ENCODE measurements at regions of chr10 and their contacts with region 1.

Region 1: DNA sequence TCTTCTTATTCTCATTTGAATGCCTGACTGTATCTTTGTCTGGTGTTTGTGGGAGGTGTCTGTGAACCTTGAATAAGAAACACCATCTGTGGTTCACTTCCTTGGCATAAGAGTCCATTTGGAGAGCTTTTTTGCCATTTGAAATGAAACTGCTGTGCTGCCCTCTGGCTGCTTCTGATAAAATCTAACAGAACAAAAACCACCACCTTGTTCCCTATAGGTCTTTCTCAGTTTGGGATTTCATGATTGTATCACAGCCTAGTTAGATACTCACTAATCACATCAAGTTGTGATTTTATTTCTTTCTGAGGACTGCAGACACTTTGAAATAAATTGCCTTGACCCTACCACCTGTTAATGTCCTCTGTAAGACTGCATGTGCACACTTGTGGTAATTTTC is 102.7 kb upstream of the FAM13C start:
- DNase-seq: no peak
- ATAC-seq: peak; percentile 58 to 91 (median 70)
- H3K4me3 ChIP-seq: no peak overlapping the region
- H3K27ac ChIP-seq: no peak overlapping the region
- H3K4me1 ChIP-seq: peaks cover 4% of the 10 kb centered on the region
- H3K27me3 ChIP-seq: no peaks in the 10 kb centered on the region
- CTCF ChIP-seq: peak; percentile 62

Region 2: DNA sequence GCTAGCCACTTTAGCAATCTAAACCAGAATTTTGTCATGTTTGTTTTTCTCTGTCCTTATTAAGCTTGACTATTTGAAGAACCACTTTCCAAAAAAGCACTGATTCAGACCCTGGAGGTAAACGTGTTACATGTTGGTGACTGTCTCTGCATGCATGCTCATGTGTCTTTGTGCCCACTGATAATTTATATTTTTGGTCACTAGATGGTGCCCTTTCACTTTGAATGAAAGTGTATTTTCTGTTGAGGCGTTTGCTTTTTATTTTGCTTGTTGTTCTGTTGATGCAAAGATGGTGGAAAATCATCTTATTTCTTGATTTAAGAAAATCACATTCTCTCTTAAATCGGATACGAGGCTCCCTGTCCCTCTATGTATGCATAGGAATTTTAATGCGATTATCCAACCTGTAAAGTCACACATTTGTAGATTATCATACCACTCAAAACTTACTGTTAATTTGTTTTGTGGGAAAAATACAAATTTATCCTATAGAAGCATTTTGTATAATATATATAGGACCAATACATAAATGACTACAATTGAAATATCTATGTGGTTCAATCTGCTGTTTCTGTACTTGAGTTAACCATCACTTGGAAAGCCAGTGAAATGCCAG is 683.1 kb before region 1 on chr10:
- intact Hi-C with region 1: loop called in 1 of 2 experiments (anchors 10 kb)
- DNase-seq: no peak
- ATAC-seq: peak in 3 of 4 donors; percentile 41 to 80 (median 66)
- H3K4me3 ChIP-seq: no peak overlapping the region
- H3K27ac ChIP-seq: peak overlapping the region; percentile 42
- H3K4me1 ChIP-seq: peaks cover 3% of the 10 kb centered on the region
- H3K27me3 ChIP-seq: no peaks in the 10 kb centered on the region
- CTCF ChIP-seq: peak; percentile 63

Region 3: GRCh38 chr10:58952747-58953466 is 512.2 kb before region 1 on chr10:
- intact Hi-C with region 1: loop called in 1 of 2 experiments (anchors 5 kb)
- DNase-seq: no peak
- ATAC-seq: peak; percentile 59 to 79 (median 72)
- H3K4me3 ChIP-seq: no peak overlapping the region
- H3K27ac ChIP-seq: peak overlapping the region; percentile 16
- H3K4me1 ChIP-seq: no peaks in the 10 kb centered on the region
- H3K27me3 ChIP-seq: no peaks in the 10 kb centered on the region
- CTCF ChIP-seq: peak; percentile 83

Region 4: GRCh38 chr10:59240582-59241183 is 224.4 kb before region 1 on chr10:
- intact Hi-C with region 1: loop called (anchors 2 kb)
- DNase-seq: no peak
- ATAC-seq: peak in 2 of 4 donors; percentile 56 to 68
- H3K4me3 ChIP-seq: no peak overlapping the region
- H3K27ac ChIP-seq: no peak overlapping the region
- H3K4me1 ChIP-seq: no peaks in the 10 kb centered on the region
- H3K27me3 ChIP-seq: no peaks in the 10 kb centered on the region
- CTCF ChIP-seq: peak; percentile 83